Activated B cell treated with CpG ODN at 0.5 μM for 24 hours (primary cell): ENCODE measurements at regions of chr18 and their contacts with region 1.

Region 1: GRCh38 chr18:812376-813171 is 532 bp upstream of the YES1 start:
- DNase-seq: peak; percentile 26
- ATAC-seq: peak; percentile 59
- H3K4me3 Mint-ChIP-seq: peak overlapping the region; percentile 80
- H3K27ac Mint-ChIP-seq: peak overlapping the region; percentile 76
- H3K4me1 Mint-ChIP-seq: peaks cover 19% of the 10 kb centered on the region
- H3K27me3 Mint-ChIP-seq: peaks cover 60% of the 10 kb centered on the region
- CTCF ChIP-seq: no peak

Region 2: DNA sequence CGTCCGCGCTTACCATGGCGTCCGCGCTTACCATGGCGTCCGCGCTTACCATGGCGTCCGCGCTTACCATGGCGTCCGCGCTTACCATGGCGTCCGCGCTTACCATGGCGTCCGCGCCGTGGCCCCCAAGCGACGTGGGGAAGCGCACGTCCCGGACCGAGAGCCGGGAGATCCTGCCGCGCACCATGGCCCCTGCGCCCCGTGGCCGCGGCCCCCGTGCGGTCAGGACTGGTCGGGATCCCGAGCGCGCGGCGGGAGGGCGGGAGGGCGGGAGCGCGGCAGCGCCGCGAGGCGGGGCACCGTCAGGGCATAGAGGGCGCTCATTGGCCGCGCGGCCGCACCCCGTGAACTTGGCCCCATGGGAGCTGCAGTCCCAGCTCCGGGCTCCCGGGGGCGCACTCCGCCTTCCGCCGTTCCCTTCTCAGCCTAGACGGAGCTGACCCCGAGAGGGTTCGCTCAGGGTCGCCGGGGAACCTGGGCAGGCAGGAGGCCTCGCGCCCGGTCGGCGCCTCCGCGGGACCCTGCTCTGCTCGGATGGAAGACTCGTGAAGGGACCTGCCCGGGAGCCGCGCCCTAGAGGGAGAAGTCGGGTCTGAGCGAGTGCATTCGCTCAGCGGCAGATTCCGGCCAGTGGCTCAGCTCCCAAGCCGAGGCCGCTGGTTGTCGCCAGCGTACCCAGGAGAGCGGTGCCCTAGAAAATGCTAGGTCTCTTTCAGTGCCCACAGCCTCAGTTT is 100.0 kb before region 1 on chr18 and contains the start of gene ENOSF1:
- CTCF ChIA-PET with region 1: no interaction called
- POLR2A ChIA-PET with region 1: no interaction called
- intact Hi-C with region 1: loop called (anchors 2 kb)
- DNase-seq: peak; percentile 62
- ATAC-seq: peak; percentile 91
- H3K4me3 Mint-ChIP-seq: peak within 1 kb of the TSS; percentile 84
- H3K27ac Mint-ChIP-seq: peak within 1 kb of the TSS; percentile 13
- H3K4me1 Mint-ChIP-seq: peaks cover 7% of the 10 kb centered on the region
- H3K27me3 Mint-ChIP-seq: peaks cover 4% of the 10 kb centered on the region
- CTCF ChIP-seq: no peak
- total RNA-seq, gene ENOSF1: 21.3 and 23.8 TPM in 2 replicates

Region 3: DNA sequence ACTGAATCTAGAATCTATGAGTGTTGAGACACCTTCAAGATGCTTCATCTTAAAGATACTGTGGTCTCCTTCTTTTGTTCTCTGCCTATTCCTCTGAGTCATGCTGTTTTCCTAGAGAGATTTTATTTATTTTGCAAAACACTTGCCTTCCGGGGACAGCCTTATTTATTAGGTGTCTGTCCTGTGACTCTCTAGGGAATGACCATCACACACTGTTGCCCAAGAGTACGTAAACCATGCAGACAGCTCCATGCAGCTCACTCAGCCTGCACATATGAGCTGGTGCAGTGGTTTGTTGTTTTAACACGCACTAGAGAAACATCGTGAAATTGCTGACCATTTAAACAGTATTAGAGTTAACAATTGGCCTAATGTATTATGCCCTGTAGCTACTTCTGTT is 79.7 kb after region 1 on chr18:
- CTCF ChIA-PET with region 1: no interaction called
- POLR2A ChIA-PET with region 1: no interaction called
- intact Hi-C with region 1: no loop called
- DNase-seq: no peak
- ATAC-seq: no peak
- H3K4me3 Mint-ChIP-seq: no peak overlapping the region
- H3K27ac Mint-ChIP-seq: no peak overlapping the region
- H3K4me1 Mint-ChIP-seq: no peaks in the 10 kb centered on the region
- H3K27me3 Mint-ChIP-seq: peaks cover 2% of the 10 kb centered on the region
- CTCF ChIP-seq: no peak